ENCODE measurements at regions of chr11 and their contacts with region 1.

Region 1: GRCh38 chr11:36509694-36510566 is at the start of gene TRAF6:
- DNase-seq: peak; percentile 89
- H3K4me3 Mint-ChIP-seq: peak within 1 kb of the TSS; percentile 94
- H3K27ac Mint-ChIP-seq: peak within 1 kb of the TSS; percentile 83
- H3K4me1 Mint-ChIP-seq: peaks cover 17% of the 10 kb centered on the region
- H3K27me3 Mint-ChIP-seq: peaks cover 16% of the 10 kb centered on the region
- total RNA-seq, gene TRAF6: 12.4 to 12.8 TPM

Region 2: DNA sequence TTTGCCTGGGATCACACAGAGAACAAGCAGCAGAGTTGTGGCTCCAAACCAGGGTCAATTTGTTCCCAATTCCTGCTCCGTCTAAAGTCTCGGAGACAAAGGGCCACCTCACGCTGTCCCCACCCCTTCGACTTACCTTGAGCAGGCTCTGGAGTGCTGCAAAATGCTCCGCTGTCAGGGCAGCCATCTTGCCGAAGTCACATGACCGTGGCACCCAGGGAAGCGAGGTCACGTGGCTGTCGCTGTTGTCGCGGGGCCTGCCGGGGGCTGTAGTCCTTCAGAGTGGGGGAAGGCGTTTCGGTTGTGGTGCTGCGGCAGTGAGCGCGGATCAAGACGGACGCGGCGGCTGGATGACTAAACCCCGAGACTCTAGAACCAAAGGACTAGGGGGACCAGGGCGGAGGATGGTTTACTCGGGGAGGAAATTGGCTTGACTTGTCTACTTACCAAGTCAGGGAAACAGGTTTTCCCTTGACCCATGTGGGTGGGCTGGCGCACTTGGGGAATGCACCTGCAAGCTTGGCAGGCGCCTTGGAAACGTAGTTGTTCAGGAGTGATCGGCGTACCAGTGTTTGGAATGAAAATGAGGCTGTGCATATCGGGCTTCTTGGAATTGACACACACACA is 220.6 kb before region 1 on chr11 and contains the start of gene COMMD9:
- CTCF ChIA-PET with region 1: interaction called, 28 read pairs
- POLR2A ChIA-PET with region 1: interaction called, 12 read pairs
- DNase-seq: peak; percentile 96
- H3K4me3 Mint-ChIP-seq: peak within 1 kb of the TSS; percentile 87
- H3K27ac Mint-ChIP-seq: peak within 1 kb of the TSS; percentile 64
- H3K4me1 Mint-ChIP-seq: peaks cover 30% of the 10 kb centered on the region
- H3K27me3 Mint-ChIP-seq: no peaks in the 10 kb centered on the region
- total RNA-seq, gene COMMD9: 30.5 to 34.1 TPM

Region 3: GRCh38 chr11:36398231-36398953 is 111.5 kb before region 1 on chr11:
- CTCF ChIA-PET with region 1: no interaction called
- POLR2A ChIA-PET with region 1: no interaction called
- DNase-seq: no peak
- H3K4me3 Mint-ChIP-seq: no peak overlapping the region
- H3K27ac Mint-ChIP-seq: no peak overlapping the region
- H3K4me1 Mint-ChIP-seq: peaks cover 46% of the 10 kb centered on the region
- H3K27me3 Mint-ChIP-seq: no peaks in the 10 kb centered on the region

Region 4: GRCh38 chr11:36890121-36890679 is 380.3 kb after region 1 on chr11:
- CTCF ChIA-PET with region 1: no interaction called
- POLR2A ChIA-PET with region 1: no interaction called
- DNase-seq: no peak
- H3K4me3 Mint-ChIP-seq: no peak overlapping the region
- H3K27ac Mint-ChIP-seq: no peak overlapping the region
- H3K4me1 Mint-ChIP-seq: no peaks in the 10 kb centered on the region
- H3K27me3 Mint-ChIP-seq: no peaks in the 10 kb centered on the region